Activated naive CD8-positive, alpha-beta T cell treated with anti-CD3 and anti-CD28 coated beads, Interleukin-2, amount 10 ng/mL, durations not matched to agents 7 days and 5 days (primary cell): ENCODE measurements at regions of chr20 and their contacts with region 1.

Region 1: GRCh38 chr20:50153485-50154377 is at the start of gene PEDS1:
- DNase-seq: peak; percentile 90
- ATAC-seq: peak; percentile 98
- H3K4me3 Mint-ChIP-seq: peak within 1 kb of the TSS; percentile 92
- H3K27ac Mint-ChIP-seq: peak within 1 kb of the TSS; percentile 89
- H3K4me1 Mint-ChIP-seq: peaks cover 36% of the 10 kb centered on the region
- H3K27me3 Mint-ChIP-seq: peaks cover 5% of the 10 kb centered on the region
- total RNA-seq, gene PEDS1: 22.1 to 24.5 TPM

Region 2: GRCh38 chr20:50115591-50116372 is 37.9 kb before region 1 on chr20:
- POLR2A ChIA-PET with region 1: interaction called, 42 read pairs
- DNase-seq: peak; percentile 84
- ATAC-seq: peak; percentile 67
- H3K4me3 Mint-ChIP-seq: peak overlapping the region; percentile 94
- H3K27ac Mint-ChIP-seq: peak overlapping the region; percentile 94
- H3K4me1 Mint-ChIP-seq: peaks cover 42% of the 10 kb centered on the region
- H3K27me3 Mint-ChIP-seq: no peaks in the 10 kb centered on the region

Region 3: GRCh38 chr20:50138479-50139393 is 15.0 kb before region 1 on chr20:
- POLR2A ChIA-PET with region 1: interaction called, 11 read pairs
- DNase-seq: no peak
- ATAC-seq: no peak
- H3K4me3 Mint-ChIP-seq: no peak overlapping the region
- H3K27ac Mint-ChIP-seq: no peak overlapping the region
- H3K4me1 Mint-ChIP-seq: peaks cover 8% of the 10 kb centered on the region
- H3K27me3 Mint-ChIP-seq: no peaks in the 10 kb centered on the region

Region 4: DNA sequence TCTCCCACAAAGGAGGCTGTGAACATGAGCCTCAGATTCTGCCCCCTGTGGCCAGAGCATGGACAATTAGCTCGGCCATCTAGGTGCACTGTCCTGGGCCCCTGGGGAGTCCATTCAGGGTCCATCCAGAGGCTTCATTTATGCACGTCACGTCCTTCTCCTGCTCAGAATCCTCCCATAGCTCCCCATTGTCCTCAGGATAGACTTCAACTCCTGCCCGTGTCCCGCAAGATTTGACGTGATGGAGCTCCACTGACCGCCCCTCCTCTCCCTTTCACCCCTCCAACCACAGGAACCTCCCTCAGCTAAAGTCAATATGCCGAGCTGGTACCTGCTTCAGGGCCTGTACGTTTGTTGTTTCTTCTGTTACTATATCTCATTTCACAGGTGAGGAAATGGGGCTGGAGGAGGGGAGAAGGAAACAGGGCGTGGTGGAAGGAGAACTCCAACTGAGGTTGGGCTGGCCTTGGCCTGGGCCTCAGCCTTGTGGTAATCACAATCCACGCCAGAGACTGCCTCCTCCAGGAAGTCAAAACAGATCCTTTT is 75.4 kb after region 1 on chr20:
- POLR2A ChIA-PET with region 1: no interaction called
- DNase-seq: no peak
- ATAC-seq: no peak
- H3K4me3 Mint-ChIP-seq: no peak overlapping the region
- H3K27ac Mint-ChIP-seq: peak overlapping the region; percentile 34
- H3K4me1 Mint-ChIP-seq: peaks cover 23% of the 10 kb centered on the region
- H3K27me3 Mint-ChIP-seq: peaks cover 7% of the 10 kb centered on the region